Psoas muscle (tissue), 8 donors: ENCODE measurements at regions of chr14 and their contacts with region 1.

Region 1: DNA sequence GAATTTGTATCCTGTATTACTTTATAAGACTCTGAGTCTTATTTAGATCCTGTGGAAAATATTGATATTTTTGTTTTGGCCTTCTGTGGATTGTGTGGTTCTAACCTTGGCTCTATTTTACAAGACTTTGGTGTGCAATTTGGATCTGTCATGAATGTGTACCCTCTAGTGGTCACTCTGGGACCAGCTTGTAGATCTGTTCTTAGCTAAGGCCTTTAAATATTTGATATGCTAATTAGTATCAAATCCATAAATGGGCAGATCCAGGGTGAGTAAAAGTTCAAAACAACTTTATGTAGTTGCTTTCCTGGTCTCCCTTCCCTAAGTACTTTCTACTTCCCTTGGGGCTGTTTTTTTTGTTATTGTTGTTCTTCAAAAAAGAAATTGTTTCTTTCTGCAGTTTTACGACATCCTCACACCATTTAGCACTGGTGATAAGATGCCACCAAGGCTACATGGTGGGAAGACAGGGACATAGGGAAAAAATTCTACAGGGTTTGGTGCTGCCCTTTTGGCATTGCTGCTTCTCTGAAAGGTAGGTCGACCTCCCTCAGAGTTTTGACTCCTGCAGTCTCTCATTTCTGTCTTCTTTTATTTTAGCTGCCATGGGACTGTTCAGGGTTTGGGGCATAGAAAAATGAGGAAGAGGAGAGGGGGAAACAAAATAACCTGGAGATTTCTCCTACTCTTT is 238.5 kb downstream of the GPHN start:
- DNase-seq: no peak
- ATAC-seq: peak; percentile 51 to 79 (median 72)
- H3K4me3 ChIP-seq: no peak overlapping the region
- H3K27ac ChIP-seq: no peak overlapping the region
- H3K4me1 ChIP-seq: peaks cover 18% of the 10 kb centered on the region
- H3K27me3 ChIP-seq: no peaks in the 10 kb centered on the region
- CTCF ChIP-seq: peak; percentile 55

Region 2: DNA sequence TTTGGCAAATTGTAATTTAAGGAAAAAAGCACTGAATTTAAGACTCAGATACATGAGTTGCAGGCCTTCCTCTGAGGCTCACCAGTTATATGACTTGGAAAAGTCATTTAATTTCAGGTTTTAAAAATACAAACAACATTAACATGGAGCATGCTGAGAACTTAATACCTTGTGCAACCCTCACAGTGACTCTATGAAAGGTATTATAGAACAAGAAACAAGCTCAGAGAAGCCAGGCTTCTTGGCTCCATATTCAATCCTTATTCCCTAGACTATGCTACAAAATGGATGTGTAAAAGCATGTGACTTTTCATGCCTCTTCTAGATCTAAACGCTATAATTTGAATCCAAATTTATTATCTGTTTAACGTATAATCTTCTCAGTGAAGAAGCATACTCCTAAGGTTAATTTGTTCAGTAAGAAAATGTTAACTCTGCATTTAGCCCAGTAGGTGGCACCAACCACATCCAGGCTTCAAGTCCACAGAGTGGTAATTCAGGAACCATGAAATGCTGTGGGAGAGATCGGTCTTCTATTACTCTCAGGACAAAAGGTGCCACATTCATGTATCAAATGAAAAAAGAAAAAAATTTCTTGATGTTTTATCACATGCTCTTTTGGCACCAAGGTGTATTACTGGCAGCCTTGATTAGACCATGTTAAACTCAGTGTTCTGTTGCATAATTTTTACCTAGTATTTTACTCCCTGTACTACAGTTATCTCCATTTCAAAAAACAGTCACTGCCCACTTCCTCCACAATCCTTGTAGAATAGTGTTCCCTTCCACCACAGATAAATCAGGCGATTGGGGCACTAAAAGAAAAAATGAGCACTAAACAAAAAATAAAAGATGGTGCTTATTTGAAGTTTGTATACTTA is 251.0 kb before region 1 on chr14:
- intact Hi-C with region 1: loop called in 1 of 2 experiments (anchors 10 kb)
- DNase-seq: no peak
- ATAC-seq: peak; percentile 82 to 98 (median 93)
- H3K4me3 ChIP-seq: peak overlapping the region; percentile 16
- H3K27ac ChIP-seq: no peak overlapping the region
- H3K4me1 ChIP-seq: peaks cover 8% of the 10 kb centered on the region
- H3K27me3 ChIP-seq: no peaks in the 10 kb centered on the region
- CTCF ChIP-seq: peak; percentile 81

Region 3: GRCh38 chr14:66628636-66629035 is 117.8 kb before region 1 on chr14:
- intact Hi-C with region 1: loop called in 1 of 2 experiments (anchors 2 kb)
- DNase-seq: no peak
- ATAC-seq: no peak
- H3K4me3 ChIP-seq: no peak overlapping the region
- H3K27ac ChIP-seq: no peak overlapping the region
- H3K4me1 ChIP-seq: peaks cover 16% of the 10 kb centered on the region
- H3K27me3 ChIP-seq: no peaks in the 10 kb centered on the region
- CTCF ChIP-seq: no peak